AG04450 (cell line): ENCODE measurements at regions of chr22 and their contacts with region 1.

Region 1: GRCh38 chr22:37862570-37863325 is 13.5 kb downstream of the EIF3L start:
- DNase-seq: no peak
- H3K4me3 ChIP-seq: no peak overlapping the region
- H3K27ac ChIP-seq: no peak overlapping the region
- H3K27me3 ChIP-seq: no peaks in the 10 kb centered on the region
- CTCF ChIP-seq: no peak

Region 2: DNA sequence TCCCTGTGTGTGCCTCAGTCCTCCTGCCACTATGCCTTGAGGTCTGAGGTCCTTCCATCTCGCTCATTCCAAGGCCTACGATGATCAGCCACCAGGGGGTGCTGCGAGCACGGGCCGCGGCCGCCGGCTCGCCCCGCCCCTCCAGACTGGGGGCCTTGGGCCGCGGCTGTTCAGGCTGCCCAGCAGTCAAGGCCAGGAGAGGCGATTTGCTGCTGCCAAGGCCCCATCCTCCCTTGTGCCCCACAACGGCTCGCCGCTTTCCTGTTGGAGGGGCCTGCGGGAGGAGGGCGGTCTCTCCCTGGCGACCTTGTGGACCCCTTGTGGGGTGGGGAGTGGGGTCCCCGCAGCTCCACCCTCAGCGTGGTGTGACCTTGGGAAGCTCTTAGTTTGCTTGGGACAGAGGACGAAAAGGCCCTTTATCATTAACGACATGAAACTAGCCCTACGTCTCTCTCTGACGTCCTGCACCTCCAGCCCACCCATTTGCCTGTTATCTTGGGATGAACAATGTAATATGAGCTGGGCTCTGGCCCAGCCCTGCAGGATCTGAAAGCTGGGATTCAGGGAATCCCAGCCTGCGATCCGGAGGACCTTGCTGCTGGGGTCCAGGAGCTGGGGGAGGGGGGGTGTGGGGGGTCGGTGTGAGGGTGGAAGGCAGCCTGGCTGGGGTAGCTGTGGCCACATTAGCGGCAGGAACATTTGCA is 44.9 kb before region 1 on chr22:
- CTCF ChIA-PET with region 1: interaction called, 133 read pairs
- POLR2A ChIA-PET with region 1: interaction called, 15 read pairs
- DNase-seq: no peak
- H3K4me3 ChIP-seq: peak overlapping the region; percentile 33
- H3K27ac ChIP-seq: peak overlapping the region; percentile 80
- H3K27me3 ChIP-seq: peaks cover 10% of the 10 kb centered on the region
- CTCF ChIP-seq: peak; percentile 80

Region 3: GRCh38 chr22:37843741-37843990 is 19.1 kb before region 1 on chr22:
- CTCF ChIA-PET with region 1: interaction called, 28 read pairs
- POLR2A ChIA-PET with region 1: interaction called, 5 read pairs
- DNase-seq: no peak
- H3K4me3 ChIP-seq: peak overlapping the region; percentile 69
- H3K27ac ChIP-seq: peak overlapping the region; percentile 61
- H3K27me3 ChIP-seq: no peaks in the 10 kb centered on the region
- CTCF ChIP-seq: no peak

Region 4: GRCh38 chr22:37880668-37881440 is 18.1 kb after region 1 on chr22:
- CTCF ChIA-PET with region 1: interaction called, 49 read pairs
- POLR2A ChIA-PET with region 1: no interaction called
- DNase-seq: peak; percentile 50
- H3K4me3 ChIP-seq: no peak overlapping the region
- H3K27ac ChIP-seq: peak overlapping the region; percentile 55
- H3K27me3 ChIP-seq: no peaks in the 10 kb centered on the region
- CTCF ChIP-seq: no peak

Region 5: DNA sequence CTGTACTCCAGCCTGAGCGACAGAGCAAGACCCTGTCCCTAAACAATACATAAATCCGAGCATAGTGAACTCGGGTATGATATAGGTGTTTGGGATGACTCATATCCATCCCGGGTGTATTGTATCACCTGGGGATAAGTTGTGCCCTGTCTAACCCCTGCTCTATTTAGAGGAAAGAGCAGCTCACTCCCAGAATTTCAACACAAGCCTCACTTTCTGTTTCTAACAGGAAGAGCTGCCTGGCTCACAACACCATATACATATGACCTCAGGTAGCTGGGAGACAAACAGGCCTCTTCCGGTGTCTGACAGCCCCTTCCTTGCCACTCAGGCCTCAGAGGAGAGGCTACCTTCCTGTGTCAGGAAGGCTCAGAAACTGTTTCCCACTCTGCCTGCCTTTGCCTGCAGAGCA is 33.4 kb after region 1 on chr22:
- CTCF ChIA-PET with region 1: interaction called, 20 read pairs
- POLR2A ChIA-PET with region 1: interaction called, 5 read pairs
- DNase-seq: no peak
- H3K4me3 ChIP-seq: no peak overlapping the region
- H3K27ac ChIP-seq: no peak overlapping the region
- H3K27me3 ChIP-seq: no peaks in the 10 kb centered on the region
- CTCF ChIP-seq: no peak

Region 6: GRCh38 chr22:37940698-37941376 is 78.1 kb after region 1 on chr22:
- CTCF ChIA-PET with region 1: interaction called, 11 read pairs
- POLR2A ChIA-PET with region 1: no interaction called
- DNase-seq: no peak
- H3K4me3 ChIP-seq: no peak overlapping the region
- H3K27ac ChIP-seq: no peak overlapping the region
- H3K27me3 ChIP-seq: no peaks in the 10 kb centered on the region
- CTCF ChIP-seq: no peak

Region 7: DNA sequence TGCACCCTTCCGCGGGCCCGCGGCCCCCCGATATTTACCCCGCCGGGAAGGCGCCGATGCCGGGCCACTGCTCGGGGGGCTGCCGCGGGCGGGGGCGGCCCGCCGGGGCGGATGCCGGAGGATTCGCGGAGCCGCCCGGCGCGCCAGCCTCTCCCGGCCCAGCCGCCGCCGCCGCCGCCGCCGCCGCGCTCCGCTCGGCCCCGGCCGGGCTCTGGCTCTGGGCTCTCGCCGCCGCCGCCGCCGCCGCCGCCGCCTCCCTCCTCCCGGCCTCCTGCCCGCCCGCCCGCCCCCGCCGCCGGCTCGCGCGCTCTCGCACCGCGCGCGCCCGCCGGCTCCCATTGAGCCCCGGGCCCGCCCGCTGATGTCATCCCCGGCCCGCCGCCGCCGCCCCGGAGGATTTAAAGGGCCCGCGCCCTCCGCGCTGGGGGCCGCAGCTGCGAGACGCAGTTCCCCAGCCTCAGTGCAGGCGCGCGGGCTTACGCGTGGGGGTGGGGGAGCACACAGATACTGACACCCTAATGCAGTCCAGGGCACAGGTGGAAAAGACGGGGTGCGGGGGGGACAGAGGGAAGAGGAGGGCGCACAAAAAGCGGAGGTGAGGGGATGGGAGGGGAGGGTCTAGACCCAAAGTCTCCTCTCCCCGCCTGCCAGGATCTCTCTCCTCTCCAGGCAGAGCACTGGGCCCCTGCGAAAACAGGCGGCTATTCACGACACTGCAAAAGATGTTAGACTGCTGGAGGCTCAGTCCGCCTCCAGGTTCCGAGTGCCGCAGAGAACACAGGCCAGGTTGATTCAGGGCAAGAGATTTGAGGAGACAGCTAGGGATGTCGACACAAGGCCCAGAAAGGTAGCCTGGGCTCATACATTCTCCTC is 454.6 kb after region 1 on chr22 and contains the start of gene CSNK1E:
- CTCF ChIA-PET with region 1: no interaction called
- POLR2A ChIA-PET with region 1: no interaction called
- DNase-seq: no peak
- H3K4me3 ChIP-seq: peak within 1 kb of the TSS; percentile 79
- H3K27ac ChIP-seq: peak within 1 kb of the TSS; percentile 97
- H3K27me3 ChIP-seq: no peaks in the 10 kb centered on the region
- CTCF ChIP-seq: no peak
- polyA plus RNA-seq, gene CSNK1E: 109 and 128 TPM in 2 replicates